ENCODE measurements at regions of chr2 and their contacts with region 1.

Region 1: DNA sequence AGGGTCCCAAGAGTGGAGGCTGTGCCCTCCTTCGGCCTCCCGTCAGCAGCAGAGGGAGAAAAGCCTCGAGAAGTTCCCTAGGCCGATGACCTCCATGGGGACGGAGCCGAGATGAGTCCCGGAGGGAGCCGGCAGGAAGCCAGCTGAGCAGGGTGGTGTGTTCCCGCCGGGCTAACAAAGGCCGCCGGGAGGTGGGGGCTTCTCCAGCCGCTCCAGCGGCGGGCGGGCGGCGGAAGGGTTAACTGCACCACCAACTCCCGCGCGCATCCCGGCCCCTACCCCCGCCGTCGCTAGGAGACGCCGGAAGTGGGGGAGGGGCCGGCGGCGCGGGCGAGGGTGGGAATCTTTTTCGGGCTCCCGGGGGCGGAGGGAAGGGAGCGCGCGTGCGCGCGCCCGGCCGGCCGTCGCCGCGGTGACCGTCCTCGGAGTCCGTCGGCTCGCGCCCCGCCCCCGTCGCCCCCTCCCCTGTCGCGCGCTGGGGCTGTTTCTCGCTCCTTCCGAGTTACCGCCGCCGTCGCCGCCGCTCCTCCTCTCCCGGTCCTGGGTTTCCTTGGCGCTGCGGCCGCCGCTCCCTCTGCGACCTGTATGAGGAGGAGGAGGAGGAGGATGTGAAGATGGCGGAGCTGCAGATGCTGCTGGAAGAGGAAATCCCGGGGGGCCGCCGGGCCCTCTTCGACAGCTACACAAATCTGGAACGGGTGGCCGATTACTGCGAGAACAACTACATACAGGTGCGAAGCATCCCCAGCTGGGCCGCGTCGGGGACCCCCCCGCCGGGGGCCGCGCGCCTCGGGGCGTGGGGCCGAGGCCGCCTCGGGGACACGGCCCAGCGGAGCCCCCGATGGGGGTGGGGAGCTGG is at the start of gene ABI2:
- DNase-seq: peak; percentile 87
- ATAC-seq: peak; percentile 72
- H3K4me3 ChIP-seq: peak within 1 kb of the TSS; percentile 88
- H3K27ac ChIP-seq: peak within 1 kb of the TSS; percentile 74
- H3K4me1 ChIP-seq: peaks cover 18% of the 10 kb centered on the region
- H3K27me3 ChIP-seq: no peaks in the 10 kb centered on the region
- CTCF ChIP-seq: no peak
- total RNA-seq, gene ABI2: 37.6 and 50.7 TPM in 2 replicates

Region 2: GRCh38 chr2:203238704-203239526 is 89.2 kb before region 1 on chr2 and contains the start of gene CYP20A1:
- CTCF ChIA-PET with region 1: no interaction called
- POLR2A ChIA-PET with region 1: no interaction called
- intact Hi-C with region 1: no loop called
- DNase-seq: peak; percentile 96
- ATAC-seq: peak; percentile 91
- H3K4me3 ChIP-seq: peak within 1 kb of the TSS; percentile 95
- H3K27ac ChIP-seq: peak within 1 kb of the TSS; percentile 88
- H3K4me1 ChIP-seq: peaks cover 16% of the 10 kb centered on the region
- H3K27me3 ChIP-seq: no peaks in the 10 kb centered on the region
- CTCF ChIP-seq: peak; percentile 44
- total RNA-seq, gene CYP20A1: 12.6 and 14.1 TPM in 2 replicates

Region 3: DNA sequence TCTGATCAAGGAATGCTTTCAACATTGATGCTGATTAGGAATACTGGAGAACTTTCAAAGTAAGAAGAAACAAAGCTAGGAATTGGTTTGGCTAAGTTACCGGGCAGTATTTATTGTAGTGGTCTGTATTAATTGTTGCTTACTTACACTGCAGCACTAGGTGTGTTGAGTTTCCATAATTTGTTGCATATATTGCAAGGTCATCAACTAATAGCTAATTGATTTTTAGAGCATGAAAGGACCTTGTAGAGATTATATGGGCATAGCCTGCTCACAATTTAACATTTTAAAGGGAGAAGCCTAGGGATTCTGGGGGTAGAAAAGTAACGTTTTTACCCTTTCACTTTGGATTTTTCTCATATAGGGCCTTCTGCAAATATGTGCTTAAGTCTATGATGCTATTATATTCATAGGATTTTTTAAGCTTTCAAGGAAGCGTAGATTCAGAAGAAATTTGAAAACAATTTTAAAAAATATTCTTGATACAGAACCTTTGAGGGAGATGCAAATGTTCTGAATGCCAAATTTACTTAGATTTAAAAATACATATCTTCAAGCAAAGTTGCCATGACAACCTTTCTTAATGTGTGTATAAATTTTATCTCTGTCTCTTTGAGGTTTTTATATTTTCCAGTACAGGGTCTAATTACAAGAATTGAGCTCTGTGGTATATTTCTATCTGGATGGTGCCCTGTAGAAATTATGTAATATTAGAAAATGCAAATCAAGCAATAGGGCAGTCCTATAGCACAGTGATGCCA is 17.3 kb before region 1 on chr2:
- CTCF ChIA-PET with region 1: no interaction called
- POLR2A ChIA-PET with region 1: no interaction called
- intact Hi-C with region 1: loop called (anchors 1 kb)
- DNase-seq: no peak
- ATAC-seq: no peak
- H3K4me3 ChIP-seq: no peak overlapping the region
- H3K27ac ChIP-seq: no peak overlapping the region
- H3K4me1 ChIP-seq: peaks cover 10% of the 10 kb centered on the region
- H3K27me3 ChIP-seq: no peaks in the 10 kb centered on the region
- CTCF ChIP-seq: no peak

Region 4: GRCh38 chr2:203340791-203341487 is 12.8 kb after region 1 on chr2:
- CTCF ChIA-PET with region 1: no interaction called
- POLR2A ChIA-PET with region 1: interaction called, 17 read pairs
- intact Hi-C with region 1: no loop called
- DNase-seq: peak; percentile 97
- ATAC-seq: peak; percentile 91
- H3K4me3 ChIP-seq: peak overlapping the region; percentile 20; the same call in 1 of the 2 replicates
- H3K27ac ChIP-seq: peak overlapping the region; percentile 77
- H3K4me1 ChIP-seq: peaks cover 32% of the 10 kb centered on the region
- H3K27me3 ChIP-seq: no peaks in the 10 kb centered on the region
- CTCF ChIP-seq: no peak

Region 5: GRCh38 chr2:203400816-203401585 is 72.9 kb after region 1 on chr2:
- CTCF ChIA-PET with region 1: no interaction called
- POLR2A ChIA-PET with region 1: no interaction called
- intact Hi-C with region 1: loop called (anchors 5 kb)
- DNase-seq: peak; percentile 70
- ATAC-seq: peak; percentile 43
- H3K4me3 ChIP-seq: no peak overlapping the region; the same call in 1 of the 2 replicates
- H3K27ac ChIP-seq: peak overlapping the region; percentile 95
- H3K4me1 ChIP-seq: peaks cover 55% of the 10 kb centered on the region
- H3K27me3 ChIP-seq: no peaks in the 10 kb centered on the region
- CTCF ChIP-seq: no peak